Left ventricle myocardium superior (tissue), 1 donor: ENCODE measurements at regions of chr3 and their contacts with region 1.

Region 1: DNA sequence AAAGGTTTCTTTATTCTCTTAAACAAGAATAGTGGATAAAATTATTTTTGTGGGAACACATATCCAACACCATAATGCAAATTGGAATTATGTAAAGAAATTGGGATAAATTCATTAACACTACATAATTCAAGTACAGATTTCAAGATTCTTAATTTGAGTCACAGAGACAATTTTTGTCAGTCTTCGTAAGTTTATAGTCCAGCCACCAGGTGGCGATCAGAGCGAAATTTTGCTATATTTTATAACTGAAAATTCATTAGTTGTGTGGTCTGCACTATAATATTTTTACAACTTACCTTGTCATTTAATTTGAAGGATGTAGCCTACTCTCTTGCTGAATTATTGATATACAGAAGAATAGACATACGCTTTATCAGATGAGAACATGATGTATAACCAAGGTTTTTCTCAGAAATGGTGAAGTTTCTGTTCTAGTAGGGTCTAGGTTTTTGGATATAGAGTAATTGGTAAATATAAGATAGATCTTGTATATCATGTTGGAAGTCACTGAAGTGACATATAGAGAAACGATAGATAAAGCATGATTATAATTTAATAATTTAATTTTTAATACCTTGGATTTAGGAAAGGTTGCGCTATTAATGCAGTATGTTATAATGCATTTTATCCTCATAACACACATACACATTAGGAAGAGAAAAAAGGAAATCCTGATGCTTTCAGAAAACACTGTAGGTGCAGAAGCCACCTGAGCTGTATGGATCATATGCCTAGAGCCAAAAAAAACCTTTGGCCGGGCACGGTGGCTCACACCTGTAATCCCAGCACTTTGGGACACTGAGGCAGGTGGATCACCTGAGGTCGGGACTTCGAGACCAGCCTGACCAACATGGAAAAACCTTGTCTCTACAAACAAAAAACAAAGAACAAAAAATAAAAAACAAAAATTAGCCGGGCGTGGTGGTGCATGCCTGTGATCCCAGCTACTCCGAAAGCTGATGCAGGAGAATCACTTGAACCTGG is 31.7 kb downstream of the PLSCR4 start:
- DNase-seq: peak; percentile 23
- ATAC-seq: no peak

Region 2: DNA sequence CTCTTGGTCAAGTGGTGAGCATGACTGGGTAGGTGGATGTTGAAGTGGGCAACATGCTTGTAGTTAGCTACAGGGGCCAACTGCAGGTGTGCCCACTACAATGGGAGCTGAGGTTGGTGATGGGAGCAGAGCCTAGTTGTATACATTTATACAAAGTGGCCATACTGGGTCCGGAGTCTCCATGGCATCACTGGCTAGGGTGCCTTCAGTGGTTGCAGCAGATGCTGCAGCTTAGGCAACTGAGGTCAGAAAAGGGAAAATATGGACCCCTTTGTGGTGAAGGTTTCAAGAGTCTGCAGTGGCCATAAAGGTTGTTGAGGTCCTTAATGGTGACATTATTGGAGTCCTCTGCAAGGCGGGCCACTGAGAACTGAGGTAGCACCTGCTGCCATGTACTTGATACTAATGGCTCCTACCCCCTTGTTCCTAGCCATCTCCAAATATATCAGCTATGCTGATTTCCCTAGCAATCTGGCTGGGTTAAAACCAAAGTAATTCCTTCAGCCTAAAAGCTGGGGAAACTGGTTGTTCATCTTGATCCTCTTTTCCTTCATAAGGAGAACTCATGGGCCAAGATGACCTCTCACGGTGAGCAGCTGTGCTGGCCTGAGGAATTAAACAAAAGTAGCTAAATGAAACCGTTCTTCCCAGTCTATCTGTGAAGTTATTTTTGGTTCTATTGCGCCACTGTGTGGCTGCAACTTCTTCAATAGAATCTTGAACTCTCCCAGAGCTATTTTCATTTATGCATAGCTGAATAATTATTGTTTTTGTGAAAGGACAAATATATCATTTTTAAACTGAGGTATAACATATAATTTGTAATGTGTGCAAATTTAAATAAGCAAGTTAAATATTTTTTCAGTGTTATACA is 107.7 kb after region 1 on chr3:
- intact Hi-C with region 1: loop called (anchors 5 kb)
- DNase-seq: no peak
- ATAC-seq: peak; percentile 74

Region 3: DNA sequence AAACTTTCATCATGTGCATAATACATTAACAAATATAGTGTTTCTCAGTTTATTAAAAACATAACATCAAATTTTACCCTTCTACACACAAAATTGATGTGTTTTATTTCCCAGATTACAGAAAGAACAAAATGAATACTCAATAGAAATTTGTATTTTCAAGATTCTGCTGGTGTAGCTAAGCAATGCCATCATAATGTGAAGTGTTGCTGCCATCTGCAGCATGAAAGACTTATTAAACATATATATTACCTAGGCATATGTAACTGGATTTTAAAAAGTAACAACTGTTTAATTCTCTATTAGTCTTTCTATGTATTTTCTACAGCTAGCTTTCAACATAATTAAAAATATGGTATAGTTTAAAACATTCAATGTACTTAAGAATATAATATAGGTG is 358.5 kb after region 1 on chr3:
- intact Hi-C with region 1: loop called (anchors 5 kb)
- DNase-seq: no peak
- ATAC-seq: no peak